CD4-positive, alpha-beta T cell (primary cell): ENCODE measurements at regions of chr9 and their contacts with region 1.

Region 1: DNA sequence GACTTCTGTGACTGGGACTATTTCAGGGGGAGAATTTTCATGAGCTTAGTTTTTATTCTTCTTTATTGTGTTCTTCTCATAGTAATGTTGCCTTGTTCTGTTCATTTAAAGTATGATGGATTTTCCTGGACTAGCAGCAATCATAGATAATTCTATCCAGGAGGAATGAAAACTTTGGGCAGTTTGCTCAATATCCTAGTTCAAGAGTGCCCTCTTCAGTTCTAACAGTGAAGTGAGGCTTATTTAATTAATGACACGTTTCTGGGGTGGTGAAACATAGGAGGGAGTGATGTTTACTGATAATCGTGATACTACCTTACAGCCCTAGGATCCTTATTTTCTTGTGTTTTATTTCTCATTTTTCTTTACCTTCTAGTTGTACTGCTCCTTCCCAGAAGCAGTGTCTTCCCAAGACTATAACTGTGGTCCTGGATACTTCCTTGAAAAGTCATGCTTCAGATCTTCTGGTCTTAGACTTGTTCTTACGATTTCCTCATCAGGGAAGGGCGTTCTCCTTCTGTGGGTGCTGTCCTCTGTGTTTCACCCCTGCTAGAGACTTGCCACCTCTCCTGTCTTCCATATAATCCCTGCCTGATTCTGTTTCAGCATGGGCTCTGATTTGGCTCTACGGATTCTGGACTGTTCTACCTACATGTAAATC is 57.4 kb downstream of the CFAP95 start:
- DNase-seq: peak in 3 of 14 experiments; percentile 9 to 39 (median 27)
- ATAC-seq: no peak
- H3K4me3 ChIP-seq: no peak overlapping the region
- H3K4me3 Mint-ChIP-seq: no peak overlapping the region
- H3K27ac ChIP-seq: no peak overlapping the region
- H3K27ac Mint-ChIP-seq: no peak overlapping the region
- H3K4me1 ChIP-seq: no peaks in the 10 kb centered on the region
- H3K4me1 Mint-ChIP-seq: no peaks in the 10 kb centered on the region
- H3K27me3 ChIP-seq: no peaks in the 10 kb centered on the region
- H3K27me3 Mint-ChIP-seq: peaks cover 9% of the 10 kb centered on the region
- CTCF ChIP-seq: peak; percentile 56

Region 2: GRCh38 chr9:69809304-69809863 is 68.6 kb before region 1 on chr9:
- CTCF ChIA-PET with region 1: no interaction called
- POLR2A ChIA-PET with region 1: no interaction called
- intact Hi-C with region 1: loop called (anchors 1 kb)
- DNase-seq: peak in 6 of 14 experiments; percentile 1 to 63 (median 30)
- ATAC-seq: peak; percentile 41
- H3K4me3 ChIP-seq: no peak overlapping the region
- H3K4me3 Mint-ChIP-seq: no peak overlapping the region
- H3K27ac ChIP-seq: no peak overlapping the region
- H3K27ac Mint-ChIP-seq: no peak overlapping the region
- H3K4me1 ChIP-seq: no peaks in the 10 kb centered on the region
- H3K4me1 Mint-ChIP-seq: peaks cover 5% of the 10 kb centered on the region
- H3K27me3 ChIP-seq: no peaks in the 10 kb centered on the region
- H3K27me3 Mint-ChIP-seq: peaks cover 7% of the 10 kb centered on the region
- CTCF ChIP-seq: peak; percentile 35

Region 3: GRCh38 chr9:69824497-69825252 is 53.3 kb before region 1 on chr9:
- CTCF ChIA-PET with region 1: no interaction called
- POLR2A ChIA-PET with region 1: no interaction called
- intact Hi-C with region 1: no loop called
- DNase-seq: no peak
- ATAC-seq: no peak
- H3K4me3 ChIP-seq: no peak overlapping the region
- H3K4me3 Mint-ChIP-seq: no peak overlapping the region
- H3K27ac ChIP-seq: no peak overlapping the region
- H3K27ac Mint-ChIP-seq: no peak overlapping the region
- H3K4me1 ChIP-seq: peaks cover 7% of the 10 kb centered on the region
- H3K4me1 Mint-ChIP-seq: peaks cover 32% of the 10 kb centered on the region
- H3K27me3 ChIP-seq: peaks cover 4 to 7% of the 10 kb centered on the region in 2 experiments
- H3K27me3 Mint-ChIP-seq: peaks cover 8% of the 10 kb centered on the region
- CTCF ChIP-seq: no peak